Activated CD8-positive, alpha-beta memory T cell treated with anti-CD3 and anti-CD28 coated beads, Interleukin-2, amount 10 ng/mL, durations not matched to agents 7 days and 5 days (primary cell): ENCODE measurements at regions of chr2 and their contacts with region 1.

Region 1: GRCh38 chr2:170873035-170873692 is 55.9 kb upstream of the GORASP2 start:
- DNase-seq: peak; percentile 87
- ATAC-seq: peak; percentile 98
- H3K4me3 Mint-ChIP-seq: peak overlapping the region; percentile 69
- H3K27ac Mint-ChIP-seq: peak overlapping the region; percentile 76
- H3K4me1 Mint-ChIP-seq: peaks cover 13% of the 10 kb centered on the region
- H3K27me3 Mint-ChIP-seq: peaks cover 10% of the 10 kb centered on the region

Region 2: DNA sequence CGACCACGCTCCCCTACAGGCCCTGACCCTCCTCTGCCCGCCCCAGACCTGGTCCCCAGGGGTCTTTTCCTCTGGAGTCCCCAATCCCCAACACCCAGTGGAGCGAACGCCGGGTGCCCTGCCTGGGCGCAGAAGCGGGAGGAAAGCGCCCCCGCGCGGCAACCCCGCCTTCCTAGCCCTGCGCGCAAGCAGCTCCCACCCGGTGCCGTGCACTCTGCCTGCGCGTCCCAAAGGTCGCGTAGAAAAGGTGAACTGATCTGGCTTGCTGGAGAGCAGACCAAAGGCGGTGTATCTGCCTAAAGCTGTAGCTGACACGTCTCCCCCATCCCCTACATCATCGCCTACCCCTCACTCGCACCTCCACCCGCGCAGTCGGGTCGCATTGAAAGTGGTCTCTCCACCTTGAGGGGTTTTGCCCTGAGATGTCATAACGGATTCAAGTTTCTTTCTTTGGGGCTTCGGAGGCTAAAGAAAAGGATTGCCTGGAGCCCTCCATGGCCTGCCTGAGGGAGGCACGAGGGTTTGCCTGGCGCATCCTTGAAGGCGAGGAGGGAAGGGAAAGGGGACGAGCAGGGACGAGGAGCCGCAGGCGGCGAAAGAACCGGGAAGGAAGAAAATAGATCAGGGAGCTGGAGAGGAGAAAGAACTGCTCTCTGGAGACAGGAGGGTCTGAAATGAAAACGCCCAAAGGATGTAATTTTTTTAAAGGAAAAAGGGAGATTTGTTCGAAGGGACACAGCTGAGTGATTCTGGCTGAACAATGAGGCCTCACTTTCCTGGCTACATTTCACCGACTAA is 50.7 kb before region 1 on chr2:
- CTCF ChIA-PET with region 1: interaction called, 20 read pairs
- DNase-seq: no peak
- ATAC-seq: peak; percentile 28
- H3K4me3 Mint-ChIP-seq: no peak overlapping the region
- H3K27ac Mint-ChIP-seq: no peak overlapping the region
- H3K4me1 Mint-ChIP-seq: peaks cover 38% of the 10 kb centered on the region
- H3K27me3 Mint-ChIP-seq: peaks cover 86% of the 10 kb centered on the region

Region 3: GRCh38 chr2:170842785-170843184 is 30.4 kb before region 1 on chr2:
- CTCF ChIA-PET with region 1: interaction called, 10 read pairs
- DNase-seq: no peak
- ATAC-seq: no peak
- H3K4me3 Mint-ChIP-seq: no peak overlapping the region
- H3K27ac Mint-ChIP-seq: no peak overlapping the region
- H3K4me1 Mint-ChIP-seq: peaks cover 13% of the 10 kb centered on the region
- H3K27me3 Mint-ChIP-seq: peaks cover 8% of the 10 kb centered on the region

Region 4: GRCh38 chr2:170886386-170886785 is 13.2 kb after region 1 on chr2:
- CTCF ChIA-PET with region 1: interaction called, 12 read pairs
- DNase-seq: no peak
- ATAC-seq: no peak
- H3K4me3 Mint-ChIP-seq: no peak overlapping the region
- H3K27ac Mint-ChIP-seq: no peak overlapping the region
- H3K4me1 Mint-ChIP-seq: no peaks in the 10 kb centered on the region
- H3K27me3 Mint-ChIP-seq: peaks cover 34% of the 10 kb centered on the region

Region 5: DNA sequence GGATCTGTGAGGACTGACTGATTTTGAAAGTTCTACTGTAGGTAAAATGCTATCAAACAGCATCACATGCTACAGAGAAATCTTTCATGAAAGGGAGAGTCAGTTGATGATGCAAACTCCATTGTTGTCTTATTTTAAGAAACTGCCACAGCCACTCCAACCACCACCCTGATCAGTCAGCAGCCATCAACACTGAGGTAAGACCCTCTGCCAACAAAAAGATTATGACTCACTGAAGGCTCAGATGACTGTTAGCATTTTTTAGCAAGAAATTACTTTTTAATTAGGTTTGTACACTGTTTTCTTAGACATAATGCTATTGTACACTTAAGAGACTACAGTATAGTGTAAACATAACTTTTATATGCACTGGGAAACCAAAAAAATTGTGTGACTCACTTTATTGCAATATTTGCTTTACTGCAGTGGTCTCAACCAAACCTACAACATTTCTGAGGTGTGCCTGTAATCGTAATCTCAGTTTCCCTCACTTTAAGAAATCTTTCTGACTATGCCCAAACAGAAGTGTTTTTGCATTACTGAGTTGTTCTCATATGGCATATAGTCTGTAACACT is 517.9 kb after region 1 on chr2:
- CTCF ChIA-PET with region 1: no interaction called
- DNase-seq: peak; percentile 70
- ATAC-seq: peak; percentile 75
- H3K4me3 Mint-ChIP-seq: no peak overlapping the region
- H3K27ac Mint-ChIP-seq: no peak overlapping the region
- H3K4me1 Mint-ChIP-seq: peaks cover 27% of the 10 kb centered on the region
- H3K27me3 Mint-ChIP-seq: no peaks in the 10 kb centered on the region